Activated naive CD4-positive, alpha-beta T cell treated with anti-CD3 and anti-CD28 coated beads for 36 hours (primary cell): ENCODE measurements at regions of chr14 and their contacts with region 1.

Region 1: DNA sequence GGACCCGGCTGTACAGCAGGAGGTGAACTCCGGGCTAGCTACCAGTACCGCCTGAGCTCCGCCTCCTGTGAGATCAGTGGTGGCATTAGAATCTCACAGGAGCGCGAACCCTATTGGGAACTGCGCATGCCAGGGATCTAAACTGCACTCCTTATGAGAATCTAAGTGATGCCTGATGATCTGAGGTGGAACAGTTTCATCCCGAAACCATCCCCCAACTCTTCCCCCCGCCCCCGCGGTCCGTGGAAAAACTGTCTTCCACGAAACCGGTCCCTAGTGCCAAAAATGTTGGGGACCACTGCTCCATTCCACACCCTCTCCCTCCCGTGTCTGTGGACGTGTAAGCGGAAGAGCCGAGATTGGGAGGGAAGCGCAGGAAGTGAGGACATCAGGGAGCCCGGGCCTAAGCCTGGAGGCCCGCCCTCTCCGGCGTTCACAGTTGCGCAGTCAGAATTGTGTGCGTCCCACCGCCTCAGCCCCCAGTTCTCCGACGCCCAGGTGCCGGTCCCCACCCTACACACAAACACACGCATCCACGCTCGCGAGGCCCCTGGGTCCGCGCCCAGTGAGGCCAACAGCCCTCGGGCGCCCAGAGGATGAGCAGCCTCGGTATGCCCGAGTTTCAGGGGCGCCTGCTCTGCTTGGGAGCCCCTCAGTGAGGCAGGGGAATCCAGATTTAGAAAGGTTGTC is 1.8 kb upstream of the RNASE4 start:
- DNase-seq: peak; percentile 81
- H3K4me3 Mint-ChIP-seq: no peak overlapping the region
- H3K27ac Mint-ChIP-seq: no peak overlapping the region
- H3K4me1 Mint-ChIP-seq: peaks cover 22% of the 10 kb centered on the region
- H3K27me3 Mint-ChIP-seq: no peaks in the 10 kb centered on the region

Region 2: GRCh38 chr14:19754172-19754571 is 928.4 kb before region 1 on chr14:
- CTCF ChIA-PET with region 1: no interaction called
- intact Hi-C with region 1: no loop called
- DNase-seq: no peak
- H3K4me3 Mint-ChIP-seq: no peak overlapping the region
- H3K27ac Mint-ChIP-seq: no peak overlapping the region
- H3K4me1 Mint-ChIP-seq: no peaks in the 10 kb centered on the region
- H3K27me3 Mint-ChIP-seq: peaks cover 2% of the 10 kb centered on the region

Region 3: DNA sequence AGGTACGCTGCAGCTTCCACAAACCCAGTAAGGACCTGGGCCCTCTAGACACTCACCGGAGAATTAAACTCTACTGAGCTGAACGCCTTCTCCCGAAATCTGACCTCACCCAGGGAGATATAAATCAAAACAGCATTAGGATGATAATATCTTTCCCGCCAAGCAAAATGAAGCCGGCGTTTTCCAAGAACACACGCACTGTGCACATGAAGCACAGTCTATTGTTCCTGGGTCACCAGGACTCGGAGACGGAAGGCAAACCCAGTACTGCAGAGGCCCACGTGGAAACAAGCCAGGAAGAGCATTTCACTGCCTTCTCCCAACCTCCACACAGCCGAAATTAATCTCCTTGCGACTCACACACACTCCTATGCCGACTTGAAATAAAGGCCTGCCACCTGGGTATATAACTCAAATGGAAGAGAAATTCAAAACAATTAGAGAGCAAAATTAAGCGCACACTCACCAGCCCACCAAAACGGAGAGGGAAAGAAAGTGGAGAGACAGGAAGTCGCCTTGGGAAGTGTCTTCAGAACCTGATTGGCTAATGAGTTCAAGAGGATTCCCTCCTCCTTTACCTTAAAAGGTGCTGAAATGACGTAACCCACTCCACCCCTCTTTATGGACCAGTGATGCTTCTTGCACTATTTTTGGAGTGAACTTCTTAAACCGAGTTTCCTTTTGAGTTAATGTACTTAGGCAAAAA is 349.6 kb before region 1 on chr14 and contains the start of gene CCNB1IP1:
- CTCF ChIA-PET with region 1: no interaction called
- intact Hi-C with region 1: loop called (anchors 1 kb)
- DNase-seq: peak; percentile 71
- H3K4me3 Mint-ChIP-seq: peak within 1 kb of the TSS; percentile 90
- H3K27ac Mint-ChIP-seq: peak within 1 kb of the TSS; percentile 92
- H3K4me1 Mint-ChIP-seq: peaks cover 38% of the 10 kb centered on the region
- H3K27me3 Mint-ChIP-seq: no peaks in the 10 kb centered on the region
- total RNA-seq, gene CCNB1IP1: 93.4 to 98.6 TPM

Region 4: GRCh38 chr14:20400965-20401593 is 281.5 kb before region 1 on chr14:
- CTCF ChIA-PET with region 1: no interaction called
- intact Hi-C with region 1: loop called (anchors 1 kb)
- DNase-seq: peak; percentile 43
- H3K4me3 Mint-ChIP-seq: peak overlapping the region; percentile 56
- H3K27ac Mint-ChIP-seq: peak overlapping the region; percentile 98
- H3K4me1 Mint-ChIP-seq: peaks cover 28% of the 10 kb centered on the region
- H3K27me3 Mint-ChIP-seq: no peaks in the 10 kb centered on the region

Region 5: GRCh38 chr14:20624495-20625070 is 58.0 kb before region 1 on chr14:
- CTCF ChIA-PET with region 1: no interaction called
- intact Hi-C with region 1: loop called (anchors 1 kb)
- DNase-seq: peak; percentile 70
- H3K4me3 Mint-ChIP-seq: peak overlapping the region; percentile 76
- H3K27ac Mint-ChIP-seq: peak overlapping the region; percentile 75
- H3K4me1 Mint-ChIP-seq: peaks cover 65% of the 10 kb centered on the region
- H3K27me3 Mint-ChIP-seq: peaks cover 21% of the 10 kb centered on the region

Region 6: DNA sequence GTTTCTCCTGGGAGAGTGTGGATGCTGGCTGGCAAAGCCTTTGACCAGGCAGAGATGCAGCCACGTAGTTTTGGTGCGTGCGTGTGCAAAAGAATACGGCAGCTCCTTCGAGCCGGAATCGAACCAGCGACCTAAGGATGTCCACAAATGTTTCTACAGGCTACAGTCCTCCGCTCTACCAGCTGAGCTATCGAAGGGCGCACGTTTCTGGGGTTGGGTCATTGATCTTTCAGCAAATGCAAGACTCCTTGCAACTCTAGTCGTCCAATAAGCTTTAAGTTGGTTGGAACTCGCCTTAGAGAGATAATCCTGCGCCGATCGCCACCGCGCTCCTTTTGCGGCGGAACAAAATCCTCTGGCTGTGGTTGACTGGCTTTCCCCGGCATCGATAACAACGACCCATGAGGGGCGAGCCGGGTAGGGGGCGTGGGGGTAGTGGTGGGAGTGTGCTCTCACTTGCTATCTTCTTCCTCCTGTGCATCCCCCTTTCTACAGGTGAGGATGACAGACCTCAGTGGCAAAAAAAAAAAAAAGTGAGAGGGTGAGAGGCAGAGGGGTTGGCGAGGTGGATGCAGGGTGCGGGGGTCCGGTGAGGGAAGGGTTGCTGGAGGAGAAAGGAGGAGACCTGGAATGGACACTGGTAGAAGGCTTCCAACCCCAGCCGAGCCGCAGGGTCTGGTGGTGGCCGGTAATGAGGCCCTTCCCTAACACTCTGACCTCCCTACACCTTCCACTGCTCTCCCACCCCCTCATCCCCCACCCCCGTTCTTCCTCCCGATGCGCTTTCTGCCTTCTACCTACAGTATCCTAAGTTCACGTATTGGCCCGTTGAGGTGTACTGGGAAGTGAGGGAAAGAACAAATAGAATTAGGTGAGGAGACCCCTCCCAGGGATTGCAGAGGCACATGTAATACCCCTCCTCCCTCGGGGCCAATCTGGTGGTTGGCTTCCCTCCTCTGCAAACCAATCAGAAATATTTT is 29.3 kb before region 1 on chr14:
- CTCF ChIA-PET with region 1: interaction called, 18 read pairs
- intact Hi-C with region 1: loop called (anchors 1 kb)
- DNase-seq: peak; percentile 87
- H3K4me3 Mint-ChIP-seq: peak overlapping the region; percentile 69
- H3K27ac Mint-ChIP-seq: peak overlapping the region; percentile 66
- H3K4me1 Mint-ChIP-seq: peaks cover 25% of the 10 kb centered on the region
- H3K27me3 Mint-ChIP-seq: peaks cover 54% of the 10 kb centered on the region

Region 7: GRCh38 chr14:20706657-20707355 is 24.2 kb after region 1 on chr14:
- CTCF ChIA-PET with region 1: no interaction called
- intact Hi-C with region 1: no loop called
- DNase-seq: no peak
- H3K4me3 Mint-ChIP-seq: no peak overlapping the region
- H3K27ac Mint-ChIP-seq: no peak overlapping the region
- H3K4me1 Mint-ChIP-seq: no peaks in the 10 kb centered on the region
- H3K27me3 Mint-ChIP-seq: no peaks in the 10 kb centered on the region

Region 8: DNA sequence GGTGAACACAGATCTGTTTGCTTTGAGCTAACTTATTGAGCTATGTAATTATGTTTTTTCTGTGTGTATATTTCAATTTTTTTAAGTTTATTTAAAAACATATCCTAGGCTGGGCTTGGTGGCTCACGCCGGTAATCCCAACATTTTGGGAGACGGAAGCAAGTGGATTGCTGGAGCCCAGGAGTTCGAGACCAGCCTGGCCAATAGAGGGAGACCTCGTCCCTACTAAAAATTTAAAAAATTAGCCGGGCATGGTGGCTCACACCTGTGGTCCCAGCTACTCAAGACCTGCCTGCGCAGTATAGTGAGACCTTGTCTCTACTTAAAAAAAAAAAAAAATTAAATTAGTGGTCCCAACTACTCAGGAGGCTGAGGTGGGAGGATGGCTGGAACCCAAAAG is 136.3 kb after region 1 on chr14:
- CTCF ChIA-PET with region 1: no interaction called
- intact Hi-C with region 1: no loop called
- DNase-seq: no peak
- H3K4me3 Mint-ChIP-seq: no peak overlapping the region
- H3K27ac Mint-ChIP-seq: no peak overlapping the region
- H3K4me1 Mint-ChIP-seq: no peaks in the 10 kb centered on the region
- H3K27me3 Mint-ChIP-seq: no peaks in the 10 kb centered on the region

Region 9: GRCh38 chr14:20989572-20990551 is 307.3 kb after region 1 on chr14 and contains the start of gene METTL17:
- CTCF ChIA-PET with region 1: no interaction called
- intact Hi-C with region 1: loop called (anchors 1 kb)
- DNase-seq: peak; percentile 94
- H3K4me3 Mint-ChIP-seq: peak within 1 kb of the TSS; percentile 86
- H3K27ac Mint-ChIP-seq: peak within 1 kb of the TSS; percentile 86
- H3K4me1 Mint-ChIP-seq: peaks cover 19% of the 10 kb centered on the region
- H3K27me3 Mint-ChIP-seq: no peaks in the 10 kb centered on the region
- total RNA-seq, gene METTL17: 90.9 to 97.5 TPM